ENCODE measurements at regions of chr2 and their contacts with region 1.

Region 1: GRCh38 chr2:24084386-24085361 is at the start of gene TP53I3:
- DNase-seq: peak; percentile 91
- ATAC-seq: peak; percentile 96
- H3K4me3 Mint-ChIP-seq: peak within 1 kb of the TSS; percentile 79
- H3K27ac Mint-ChIP-seq: peak within 1 kb of the TSS; percentile 82
- H3K4me1 Mint-ChIP-seq: peaks cover 13% of the 10 kb centered on the region
- H3K27me3 Mint-ChIP-seq: no peaks in the 10 kb centered on the region
- total RNA-seq, gene TP53I3: 1.0 to 1.2 TPM

Region 2: DNA sequence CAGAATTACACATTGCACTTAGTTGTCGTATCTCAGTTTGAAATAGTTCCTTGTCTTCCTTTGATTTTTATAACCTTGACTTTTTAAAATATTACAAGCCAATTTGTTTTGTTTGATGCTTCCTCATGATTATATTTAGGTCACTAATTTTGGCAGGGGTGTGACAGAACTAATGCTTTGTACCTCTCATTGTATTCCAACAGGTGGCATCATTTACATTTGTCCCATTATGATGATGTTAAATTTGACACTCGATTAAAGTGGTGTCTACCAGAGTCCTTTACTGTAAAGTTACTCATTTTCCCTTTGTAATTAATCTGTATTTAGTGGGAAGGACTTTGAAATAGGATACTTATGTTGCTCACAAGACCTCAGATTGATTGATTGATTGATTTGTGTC is 96.3 kb before region 1 on chr2:
- CTCF ChIA-PET with region 1: no interaction called
- POLR2A ChIA-PET with region 1: no interaction called
- intact Hi-C with region 1: loop called (anchors 1 to 5 kb)
- DNase-seq: no peak
- ATAC-seq: no peak
- H3K4me3 Mint-ChIP-seq: no peak overlapping the region
- H3K27ac Mint-ChIP-seq: no peak overlapping the region
- H3K4me1 Mint-ChIP-seq: no peaks in the 10 kb centered on the region
- H3K27me3 Mint-ChIP-seq: no peaks in the 10 kb centered on the region

Region 3: GRCh38 chr2:24046930-24047702 is 37.6 kb before region 1 on chr2 and contains the start of gene WDCP:
- CTCF ChIA-PET with region 1: interaction called, 18 read pairs
- POLR2A ChIA-PET with region 1: interaction called, 5 read pairs
- intact Hi-C with region 1: loop called in 1 of 2 experiments (anchors 2 kb)
- DNase-seq: peak; percentile 97
- ATAC-seq: peak; percentile 100
- H3K4me3 Mint-ChIP-seq: peak within 1 kb of the TSS; percentile 88
- H3K27ac Mint-ChIP-seq: peak within 1 kb of the TSS; percentile 91
- H3K4me1 Mint-ChIP-seq: peaks cover 25% of the 10 kb centered on the region
- H3K27me3 Mint-ChIP-seq: peaks cover 5% of the 10 kb centered on the region
- total RNA-seq, gene WDCP: 13.2 to 21.5 TPM

Region 4: DNA sequence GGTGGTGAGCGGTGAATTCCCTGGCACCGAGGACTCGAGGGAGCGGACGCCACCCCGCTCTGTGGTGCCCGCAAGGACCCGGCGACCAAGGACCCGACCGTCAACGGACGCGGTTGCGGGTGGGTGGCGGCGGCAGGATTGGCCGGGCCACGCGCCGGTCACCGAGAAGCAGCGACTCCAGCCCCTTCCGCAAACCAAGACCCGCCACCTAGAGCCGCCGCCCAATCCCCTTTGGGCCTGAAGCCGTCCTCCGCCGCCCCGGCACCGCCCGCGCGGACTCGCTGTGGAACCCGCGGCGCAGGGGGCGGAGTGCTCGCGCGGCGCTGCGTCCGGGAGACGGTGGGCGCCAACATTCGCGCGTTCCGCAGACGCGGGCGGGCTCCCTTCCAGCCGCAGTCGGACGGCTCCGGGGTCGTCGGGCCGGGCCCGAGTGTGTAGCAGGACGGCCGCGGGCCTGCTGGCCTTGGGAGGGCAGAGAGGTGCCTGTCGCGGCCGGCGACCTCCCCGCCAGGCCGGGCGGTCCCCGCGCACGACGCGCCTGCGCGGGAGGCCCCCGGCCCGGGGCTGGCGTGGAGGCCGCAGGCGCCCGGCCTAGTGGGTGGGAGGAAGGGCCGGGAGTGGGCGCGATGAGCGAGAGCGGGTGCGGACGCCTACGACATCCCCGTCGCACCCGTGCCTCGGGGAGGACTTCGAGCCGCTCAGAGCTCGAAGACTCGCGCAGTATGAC is 38.7 kb after region 1 on chr2 and contains the starts of genes FAM228B and PFN4:
- CTCF ChIA-PET with region 1: interaction called, 14 read pairs
- POLR2A ChIA-PET with region 1: no interaction called
- intact Hi-C with region 1: no loop called
- DNase-seq: peak; percentile 79
- ATAC-seq: peak; percentile 89
- H3K4me3 Mint-ChIP-seq: peak within 1 kb of the TSS; percentile 75
- H3K27ac Mint-ChIP-seq: peak within 1 kb of the TSS; percentile 78
- H3K4me1 Mint-ChIP-seq: peaks cover 9% of the 10 kb centered on the region
- H3K27me3 Mint-ChIP-seq: no peaks in the 10 kb centered on the region
- total RNA-seq, gene FAM228B: 5.2 to 10.5 TPM
- total RNA-seq, gene PFN4: 0.30 TPM in 1 of 2 experiments, not detected in the other